Posterior vena cava (tissue), 2 donors: ENCODE measurements at regions of chr5 and their contacts with region 1.

Region 1: GRCh38 chr5:163134061-163134460 is 303.3 kb upstream of the CCNG1 start:
- DNase-seq: no peak

Region 2: DNA sequence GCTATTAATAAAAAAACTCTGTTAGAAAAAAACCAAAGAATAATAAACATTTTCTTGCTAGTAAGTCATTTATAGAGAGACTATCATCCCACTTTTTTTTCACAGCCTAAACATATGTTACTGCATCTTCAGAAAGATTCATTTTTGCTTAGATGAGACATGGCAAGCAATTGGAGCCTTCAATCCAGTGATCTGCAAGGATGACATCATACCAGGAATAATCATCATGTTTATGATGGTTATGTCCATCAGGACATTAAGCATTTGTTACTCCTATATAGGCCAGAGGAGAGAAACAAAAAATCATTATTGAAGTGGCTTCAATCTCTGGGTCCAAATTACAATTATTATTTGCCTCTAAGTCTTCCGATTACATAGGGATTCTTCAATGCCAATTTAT is 323.0 kb before region 1 on chr5:
- intact Hi-C with region 1: loop called in 1 of 2 experiments (anchors 5 kb)
- DNase-seq: no peak

Region 3: GRCh38 chr5:163172540-163173338 is 38.7 kb after region 1 on chr5:
- intact Hi-C with region 1: no loop called
- DNase-seq: no peak

Region 4: GRCh38 chr5:163373428-163374084 is 239.5 kb after region 1 on chr5:
- intact Hi-C with region 1: no loop called
- DNase-seq: no peak

Region 5: DNA sequence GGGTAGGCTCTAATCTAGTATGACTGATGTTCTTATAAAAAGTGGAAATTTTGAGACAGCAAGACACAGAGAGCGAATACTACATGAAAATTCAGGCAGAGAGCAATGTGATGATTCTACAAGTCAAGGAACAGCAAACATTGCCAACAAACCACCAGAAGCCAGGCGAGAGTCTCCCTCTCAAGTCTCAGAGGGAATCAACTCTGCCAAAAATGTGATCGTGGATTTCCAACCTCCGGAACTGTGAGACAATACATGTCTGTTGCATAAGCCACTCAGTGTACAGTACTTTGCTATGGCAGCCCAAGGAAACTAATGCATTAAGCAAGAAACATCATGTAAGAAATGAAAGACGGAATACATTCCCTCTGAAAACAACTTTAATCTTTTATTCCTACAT is 251.2 kb after region 1 on chr5:
- intact Hi-C with region 1: no loop called
- DNase-seq: no peak